ENCODE measurements at regions of chr1 and their contacts with region 1.

Region 1: DNA sequence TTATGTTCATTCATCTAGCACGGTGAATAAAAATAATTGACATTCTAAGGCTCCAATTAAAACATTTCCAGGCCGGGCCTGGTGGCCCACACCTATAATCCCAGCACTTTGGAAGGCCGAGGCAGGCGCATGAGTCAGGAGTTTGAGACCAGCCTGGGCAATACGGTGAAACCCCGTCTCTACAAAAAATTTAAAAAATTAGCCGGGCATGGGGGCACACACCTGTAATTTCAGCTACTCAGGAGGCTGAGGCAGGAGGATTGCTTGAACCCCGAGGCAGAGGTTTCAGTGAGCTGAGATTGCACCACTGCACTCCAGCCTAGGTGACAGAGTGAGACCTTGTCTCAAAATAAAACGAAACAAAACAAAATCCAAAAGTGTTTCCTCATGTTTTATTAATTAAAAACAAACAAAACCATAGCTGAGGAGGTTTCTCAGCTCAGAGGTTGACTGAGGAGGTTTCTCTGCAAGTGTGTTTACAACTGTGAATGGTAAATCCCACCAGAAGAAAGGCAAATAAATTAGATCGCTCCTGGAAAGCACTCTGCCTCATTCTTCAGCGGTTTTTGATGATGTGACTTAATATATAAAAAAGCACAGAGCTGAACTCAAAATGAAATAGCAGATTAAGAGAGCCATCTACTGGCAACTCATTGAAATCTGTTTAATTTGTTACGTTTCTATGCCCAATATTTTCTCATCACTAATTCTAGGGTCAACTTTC is 37.7 kb upstream of the ATG4C start:
- DNase-seq: peak; percentile 36
- H3K4me3 ChIP-seq: peak overlapping the region in 2 of 3 experiments; percentile 3 to 17
- H3K27ac ChIP-seq: no peak overlapping the region
- H3K4me1 ChIP-seq: no peaks in the 10 kb centered on the region
- H3K27me3 ChIP-seq: no peaks in the 10 kb centered on the region
- CTCF ChIP-seq: peak; percentile 48 to 51

Region 2: GRCh38 chr1:62175568-62176179 is 570.6 kb before region 1 on chr1:
- CTCF ChIA-PET with region 1: no interaction called
- dilution Hi-C with region 1: no loop called
- in situ Hi-C with region 1: loop called (anchors 25 kb)
- intact Hi-C with region 1: loop called (anchors 1 kb)
- DNase-seq: peak; percentile 39
- H3K4me3 ChIP-seq: no peak overlapping the region
- H3K27ac ChIP-seq: no peak overlapping the region
- H3K4me1 ChIP-seq: peaks cover 8% of the 10 kb centered on the region
- H3K27me3 ChIP-seq: peaks cover 1% of the 10 kb centered on the region
- CTCF ChIP-seq: peak; percentile 77 to 79

Region 3: DNA sequence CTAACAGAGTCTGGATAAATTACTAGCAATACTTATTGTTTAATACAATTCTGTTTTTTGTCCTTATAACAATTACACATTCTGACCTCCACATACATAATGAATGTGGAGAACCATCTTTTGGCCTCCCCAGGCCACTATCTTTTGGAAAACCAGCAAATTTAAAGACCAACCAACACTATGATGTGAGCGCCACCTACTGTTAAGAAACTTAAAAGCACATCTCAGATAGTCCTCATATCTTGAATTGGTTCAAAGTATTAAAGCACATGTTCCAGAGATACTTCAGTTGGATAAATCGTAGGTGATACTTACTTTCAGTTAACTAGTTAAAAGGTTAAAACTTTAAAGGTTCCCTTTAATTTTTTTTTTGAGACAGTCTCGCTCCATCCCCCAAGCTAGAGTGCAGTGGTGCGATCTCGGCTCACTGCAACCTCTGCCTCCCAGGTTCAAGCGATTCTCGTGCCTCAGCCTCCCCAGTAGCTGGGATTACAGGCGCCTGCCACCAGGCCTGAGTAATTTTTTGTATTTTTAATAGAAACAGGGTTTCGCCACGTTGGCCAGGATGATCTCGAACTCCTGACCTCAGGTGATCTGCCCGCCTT is 338.7 kb before region 1 on chr1:
- CTCF ChIA-PET with region 1: no interaction called
- dilution Hi-C with region 1: no loop called
- in situ Hi-C with region 1: no loop called
- intact Hi-C with region 1: loop called (anchors 10 kb)
- DNase-seq: peak; percentile 44
- H3K4me3 ChIP-seq: no peak overlapping the region
- H3K27ac ChIP-seq: no peak overlapping the region
- H3K4me1 ChIP-seq: no peaks in the 10 kb centered on the region
- H3K27me3 ChIP-seq: no peaks in the 10 kb centered on the region
- CTCF ChIP-seq: peak; percentile 77 to 78

Region 4: GRCh38 chr1:62508187-62508758 is 238.0 kb before region 1 on chr1:
- CTCF ChIA-PET with region 1: interaction called, 3 read pairs
- dilution Hi-C with region 1: no loop called
- in situ Hi-C with region 1: loop called (anchors 10 kb)
- intact Hi-C with region 1: loop called (anchors 1 kb)
- DNase-seq: peak; percentile 11
- H3K4me3 ChIP-seq: no peak overlapping the region
- H3K27ac ChIP-seq: no peak overlapping the region
- H3K4me1 ChIP-seq: no peaks in the 10 kb centered on the region
- H3K27me3 ChIP-seq: no peaks in the 10 kb centered on the region
- CTCF ChIP-seq: peak; percentile 52 to 64

Region 5: GRCh38 chr1:62530516-62531154 is 215.6 kb before region 1 on chr1:
- CTCF ChIA-PET with region 1: interaction called, 10 read pairs
- dilution Hi-C with region 1: no loop called
- in situ Hi-C with region 1: loop called in 1 of 2 experiments (anchors 10 kb)
- intact Hi-C with region 1: loop called (anchors 1 kb)
- DNase-seq: peak; percentile 49
- H3K4me3 ChIP-seq: no peak overlapping the region
- H3K27ac ChIP-seq: no peak overlapping the region
- H3K4me1 ChIP-seq: no peaks in the 10 kb centered on the region
- H3K27me3 ChIP-seq: no peaks in the 10 kb centered on the region
- CTCF ChIP-seq: peak; percentile 59 to 70

Region 6: DNA sequence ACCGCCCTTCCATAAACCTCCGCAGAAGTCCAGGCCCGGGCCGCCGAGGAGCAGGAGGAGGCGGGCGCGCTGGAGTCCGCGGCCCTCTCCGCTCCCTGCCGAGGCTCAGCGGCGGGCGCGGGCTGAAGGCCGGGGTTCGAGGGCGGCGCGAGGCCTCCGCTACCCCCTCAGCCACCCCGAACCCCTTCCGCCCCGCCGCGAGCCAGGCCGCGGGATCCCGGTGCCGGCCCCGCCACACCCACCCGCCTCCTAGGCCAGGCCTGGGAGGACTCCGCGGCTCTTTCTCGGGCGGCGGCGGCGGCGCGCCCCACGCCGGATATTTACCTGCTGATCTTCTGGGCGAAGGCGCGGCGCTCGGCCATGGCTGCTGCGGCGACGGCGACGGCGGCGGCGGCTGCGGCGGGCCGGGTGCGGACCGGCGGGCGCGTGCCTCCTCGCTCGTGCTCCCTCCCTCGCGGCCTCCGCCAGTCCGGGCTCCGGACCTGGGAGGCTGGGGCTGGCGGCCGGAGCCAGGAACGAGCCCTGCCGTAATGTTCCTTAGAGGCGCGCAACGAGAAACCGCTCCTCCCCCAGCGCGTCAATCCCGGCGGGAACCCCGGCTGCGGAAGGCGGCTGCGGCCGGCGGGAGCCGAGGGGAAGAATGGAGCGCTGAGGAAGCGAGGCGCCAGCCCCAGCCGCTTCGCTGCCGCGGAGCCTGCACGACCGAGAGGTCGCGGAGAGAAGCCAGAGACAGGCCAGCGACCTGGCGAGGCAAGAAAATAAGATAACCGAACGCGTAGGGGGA is 58.2 kb before region 1 on chr1 and contains the start of gene DOCK7:
- CTCF ChIA-PET with region 1: no interaction called
- dilution Hi-C with region 1: no loop called
- in situ Hi-C with region 1: no loop called
- intact Hi-C with region 1: loop called (anchors 5 kb)
- DNase-seq: peak; percentile 79
- H3K4me3 ChIP-seq: peak within 1 kb of the TSS; percentile 54 to 83 (median 55)
- H3K27ac ChIP-seq: peak within 1 kb of the TSS; percentile 75
- H3K4me1 ChIP-seq: peaks cover 44% of the 10 kb centered on the region
- H3K27me3 ChIP-seq: no peaks in the 10 kb centered on the region
- CTCF ChIP-seq: no peak
- total RNA-seq, gene DOCK7: 76.2 to 83.9 TPM

Region 7: DNA sequence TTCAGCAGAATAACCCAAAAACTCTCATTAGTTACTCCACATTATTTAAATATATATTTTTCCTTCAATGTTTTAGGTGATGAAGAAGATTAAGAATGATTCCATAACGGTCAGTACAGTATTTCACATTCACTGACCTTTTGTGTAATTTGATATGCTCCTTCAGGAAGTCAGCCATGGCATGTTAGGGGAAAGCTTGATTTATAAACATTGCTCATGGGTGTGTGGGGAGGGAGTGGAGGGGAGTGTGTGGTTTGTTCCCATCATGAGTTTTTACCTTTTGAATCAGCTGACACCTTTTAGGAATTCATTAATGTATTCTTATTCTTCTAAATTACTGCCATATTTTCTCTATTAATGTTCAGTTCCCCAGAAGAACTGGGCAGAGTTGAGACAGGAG is 277.9 kb after region 1 on chr1:
- CTCF ChIA-PET with region 1: no interaction called
- dilution Hi-C with region 1: no loop called
- in situ Hi-C with region 1: no loop called
- intact Hi-C with region 1: no loop called
- DNase-seq: no peak
- H3K4me3 ChIP-seq: no peak overlapping the region
- H3K27ac ChIP-seq: no peak overlapping the region
- H3K4me1 ChIP-seq: no peaks in the 10 kb centered on the region
- H3K27me3 ChIP-seq: no peaks in the 10 kb centered on the region
- CTCF ChIP-seq: no peak

Region 8: DNA sequence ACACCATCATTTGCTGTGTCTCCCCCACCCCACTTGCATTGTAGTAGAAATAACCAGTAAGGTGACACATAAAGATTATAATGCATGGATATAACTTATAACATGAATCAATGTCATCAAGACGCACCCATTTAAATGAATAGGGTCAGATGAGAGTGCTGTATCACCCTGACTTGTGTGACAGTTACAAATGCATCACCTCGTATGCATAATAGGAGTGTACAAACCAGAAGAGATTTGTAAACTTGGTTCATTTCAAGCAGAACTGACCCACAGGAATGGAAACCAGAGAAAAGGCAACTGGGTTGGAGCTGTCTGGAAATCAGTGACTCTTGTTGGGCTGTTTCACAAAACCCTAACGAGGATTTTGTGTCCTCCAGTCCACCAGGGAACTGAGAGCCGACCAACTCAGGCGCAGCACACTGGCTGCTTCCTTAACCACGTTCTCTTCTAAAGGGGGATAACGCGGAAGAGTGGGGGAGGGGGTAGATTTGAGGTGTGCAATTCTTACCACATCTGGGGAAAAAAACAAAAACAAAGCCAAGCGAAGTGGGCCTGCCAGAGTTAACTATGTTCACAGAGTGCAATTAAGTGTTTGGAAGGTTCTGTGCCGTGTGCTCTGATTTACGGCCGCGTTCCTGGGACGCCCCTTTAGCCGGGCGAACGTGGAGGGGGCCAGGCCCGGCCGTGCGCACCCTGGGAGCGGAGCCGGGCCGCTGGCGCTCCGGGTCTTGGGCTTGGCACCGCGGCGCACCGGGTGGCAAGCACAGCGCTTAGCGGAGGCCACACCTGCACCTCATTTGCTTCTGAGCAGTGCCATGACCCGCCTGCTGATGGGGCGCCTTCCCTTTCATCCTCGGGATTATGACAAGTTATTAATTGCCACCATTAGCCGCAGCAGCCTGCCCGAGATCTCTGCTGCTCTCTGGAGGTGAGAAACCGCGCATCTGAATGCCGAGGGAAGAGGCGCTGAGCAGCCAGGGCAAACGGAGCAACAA is 327.4 kb after region 1 on chr1:
- CTCF ChIA-PET with region 1: no interaction called
- dilution Hi-C with region 1: no loop called
- in situ Hi-C with region 1: no loop called
- intact Hi-C with region 1: no loop called
- DNase-seq: no peak
- H3K4me3 ChIP-seq: no peak overlapping the region
- H3K27ac ChIP-seq: no peak overlapping the region
- H3K4me1 ChIP-seq: no peaks in the 10 kb centered on the region
- H3K27me3 ChIP-seq: peaks cover 3% of the 10 kb centered on the region
- CTCF ChIP-seq: no peak

Measured in mammary epithelial cell (primary cell).